Calu3 (cell line): ENCODE measurements at regions of chr12 and their contacts with region 1.

Region 1: DNA sequence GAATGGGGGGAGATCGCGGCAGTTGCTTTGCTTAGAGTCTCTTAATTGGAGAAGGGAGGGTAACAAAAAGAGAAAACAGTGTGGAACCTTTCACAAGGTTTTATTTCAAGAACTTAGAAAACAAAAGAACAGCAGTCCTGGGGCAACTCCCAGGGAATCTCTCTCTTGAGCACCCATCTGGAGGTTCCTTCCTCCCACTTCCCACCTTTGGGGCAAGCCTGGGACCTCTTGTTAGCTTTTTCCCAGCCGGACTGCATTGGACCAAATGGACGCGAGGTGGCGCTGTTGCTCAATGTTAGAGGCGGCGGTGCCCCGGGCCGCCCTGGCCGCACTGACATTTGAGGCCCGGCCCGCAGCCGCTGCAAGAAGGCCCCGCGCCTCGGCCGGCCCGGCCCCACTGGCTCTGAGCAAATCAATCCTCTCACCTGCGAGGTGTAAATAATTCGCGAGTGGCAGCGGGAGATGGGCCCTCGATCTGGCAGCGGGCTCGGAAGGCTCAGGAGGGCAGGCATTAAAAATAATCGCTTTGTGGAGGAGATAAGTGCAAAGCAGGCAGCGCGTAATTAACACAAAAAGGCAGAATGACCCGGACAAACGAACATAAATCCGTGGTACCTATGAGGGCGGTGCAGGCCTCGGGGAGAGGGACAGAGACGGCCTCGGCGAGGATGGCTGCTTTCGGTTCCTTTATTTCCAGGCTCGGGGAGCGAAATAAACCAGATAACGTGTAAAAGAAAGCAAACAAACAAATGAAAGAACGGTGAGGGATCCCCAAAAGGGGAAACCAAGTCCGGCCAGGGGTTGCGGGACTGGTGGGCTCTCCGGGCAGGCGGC is 2.7 kb upstream of the HOXC8 start:
- DNase-seq: peak; percentile 90
- H3K4me3 Mint-ChIP-seq: peak overlapping the region; percentile 28
- H3K27ac Mint-ChIP-seq: no peak overlapping the region
- H3K4me1 Mint-ChIP-seq: peaks cover 12% of the 10 kb centered on the region
- H3K27me3 Mint-ChIP-seq: peaks cover 100% of the 10 kb centered on the region
- CTCF ChIP-seq: peak; percentile 95

Region 2: DNA sequence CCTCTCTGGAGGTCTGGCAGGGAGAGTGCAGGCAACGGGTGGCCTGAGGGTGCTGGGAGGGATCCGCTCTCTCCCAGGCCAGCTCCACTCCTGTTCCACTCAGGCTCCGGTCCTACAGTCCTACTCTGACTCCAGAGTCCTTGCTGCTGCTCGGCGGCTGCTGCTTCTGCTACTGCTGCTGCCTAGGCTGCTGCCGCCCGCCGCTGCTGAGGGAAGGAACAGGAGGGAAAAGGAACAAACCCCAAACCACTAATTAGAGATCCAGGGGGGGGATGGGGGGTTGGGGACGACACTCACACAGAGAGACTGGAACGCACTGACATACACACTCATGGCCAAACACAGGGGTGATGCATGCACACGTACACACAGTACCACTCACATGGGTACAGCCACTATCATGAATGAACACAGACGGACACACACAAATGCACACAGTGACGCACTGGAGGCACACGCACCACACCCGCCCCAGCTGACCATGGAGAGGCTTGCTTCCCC is 669.8 kb before region 1 on chr12 and contains the start of gene SP7:
- CTCF ChIA-PET with region 1: no interaction called
- intact Hi-C with region 1: no loop called
- DNase-seq: no peak
- H3K4me3 Mint-ChIP-seq: no peak within 1 kb of the TSS
- H3K27ac Mint-ChIP-seq: no peak within 1 kb of the TSS
- H3K4me1 Mint-ChIP-seq: no peaks in the 10 kb centered on the region
- H3K27me3 Mint-ChIP-seq: peaks cover 94% of the 10 kb centered on the region
- CTCF ChIP-seq: no peak
- total RNA-seq, gene SP7: not detected in 2 replicates

Region 3: DNA sequence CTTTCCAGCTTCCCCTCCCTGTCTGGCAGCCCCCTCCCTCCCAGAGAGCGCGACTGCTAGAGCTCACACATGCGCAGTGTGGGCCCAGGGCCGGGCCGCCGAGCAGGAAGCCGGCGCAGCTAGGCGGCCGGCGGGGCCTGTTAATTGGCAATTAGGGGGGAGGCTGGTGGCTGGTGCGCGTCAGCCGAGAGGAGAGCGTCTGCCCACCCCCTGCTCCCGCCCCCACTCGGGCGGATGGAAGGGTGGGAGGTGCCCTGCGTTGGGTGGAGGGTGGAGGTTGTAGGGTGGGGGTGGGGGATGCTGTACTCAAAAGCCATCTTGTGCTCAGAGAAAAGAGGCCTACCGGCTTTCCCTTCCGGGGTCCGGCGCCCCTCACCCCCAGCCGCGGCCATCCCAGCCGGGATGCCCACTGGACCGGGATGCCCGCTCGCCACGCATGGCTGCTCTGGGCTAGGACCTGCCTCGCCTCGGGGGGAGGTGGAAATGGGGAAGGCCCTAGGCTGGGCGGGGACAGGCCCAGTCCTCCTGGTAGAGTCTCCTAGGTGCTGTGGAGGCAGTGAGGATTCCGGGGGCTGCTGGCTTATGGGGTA is 11.9 kb after region 1 on chr12:
- CTCF ChIA-PET with region 1: interaction called, 18 read pairs
- intact Hi-C with region 1: no loop called
- DNase-seq: peak; percentile 81
- H3K4me3 Mint-ChIP-seq: peak overlapping the region; percentile 77
- H3K27ac Mint-ChIP-seq: no peak overlapping the region
- H3K4me1 Mint-ChIP-seq: no peaks in the 10 kb centered on the region
- H3K27me3 Mint-ChIP-seq: peaks cover 80% of the 10 kb centered on the region
- CTCF ChIP-seq: no peak

Region 4: GRCh38 chr12:54191550-54192022 is 185.5 kb after region 1 on chr12:
- CTCF ChIA-PET with region 1: interaction called, 24 read pairs
- intact Hi-C with region 1: no loop called
- DNase-seq: peak; percentile 85
- H3K4me3 Mint-ChIP-seq: no peak overlapping the region
- H3K27ac Mint-ChIP-seq: no peak overlapping the region
- H3K4me1 Mint-ChIP-seq: peaks cover 24% of the 10 kb centered on the region
- H3K27me3 Mint-ChIP-seq: peaks cover 66% of the 10 kb centered on the region
- CTCF ChIP-seq: peak; percentile 76

Region 5: DNA sequence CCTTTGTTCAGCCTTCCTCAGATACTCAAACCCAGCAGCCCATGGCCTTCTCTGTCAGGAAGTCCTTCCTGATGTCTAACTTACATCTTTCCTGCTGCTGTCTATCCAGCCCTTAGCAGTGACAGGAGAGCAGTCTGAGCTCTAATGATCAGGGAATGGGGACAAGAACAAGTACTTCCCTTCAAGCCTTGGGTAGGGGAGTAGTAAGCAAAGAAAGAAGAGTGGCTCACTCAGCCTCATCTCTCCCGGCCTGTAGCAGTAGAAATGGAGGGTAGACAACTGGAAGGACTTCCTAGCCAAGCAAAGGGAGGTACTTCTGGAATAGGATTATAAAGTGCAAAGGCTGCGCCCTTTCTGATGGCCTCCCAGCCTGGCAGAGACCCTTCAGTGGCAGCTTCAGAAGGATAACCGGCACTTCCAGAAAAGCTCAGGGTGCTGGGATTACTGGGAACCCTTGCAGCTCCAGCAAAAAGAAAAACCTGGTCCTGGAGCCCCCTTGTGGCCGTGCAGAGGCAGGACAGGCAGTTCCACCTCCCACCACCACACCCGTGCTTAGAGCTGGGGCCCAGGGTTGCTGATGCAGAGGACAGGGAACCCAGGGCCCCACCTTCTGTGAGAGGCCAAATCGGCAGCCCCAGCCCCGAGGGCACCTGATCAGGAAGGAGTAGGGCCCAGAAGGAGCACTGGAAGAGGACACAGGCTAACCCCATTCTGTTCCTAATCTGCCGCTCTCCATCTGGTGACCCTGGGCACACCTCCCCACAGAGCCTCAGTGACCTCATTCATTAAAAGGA is 195.1 kb after region 1 on chr12:
- CTCF ChIA-PET with region 1: interaction called, 45 read pairs
- intact Hi-C with region 1: loop called (anchors 2 kb)
- DNase-seq: peak; percentile 88
- H3K4me3 Mint-ChIP-seq: no peak overlapping the region
- H3K27ac Mint-ChIP-seq: no peak overlapping the region
- H3K4me1 Mint-ChIP-seq: no peaks in the 10 kb centered on the region
- H3K27me3 Mint-ChIP-seq: peaks cover 82% of the 10 kb centered on the region
- CTCF ChIP-seq: peak; percentile 98

Region 6: DNA sequence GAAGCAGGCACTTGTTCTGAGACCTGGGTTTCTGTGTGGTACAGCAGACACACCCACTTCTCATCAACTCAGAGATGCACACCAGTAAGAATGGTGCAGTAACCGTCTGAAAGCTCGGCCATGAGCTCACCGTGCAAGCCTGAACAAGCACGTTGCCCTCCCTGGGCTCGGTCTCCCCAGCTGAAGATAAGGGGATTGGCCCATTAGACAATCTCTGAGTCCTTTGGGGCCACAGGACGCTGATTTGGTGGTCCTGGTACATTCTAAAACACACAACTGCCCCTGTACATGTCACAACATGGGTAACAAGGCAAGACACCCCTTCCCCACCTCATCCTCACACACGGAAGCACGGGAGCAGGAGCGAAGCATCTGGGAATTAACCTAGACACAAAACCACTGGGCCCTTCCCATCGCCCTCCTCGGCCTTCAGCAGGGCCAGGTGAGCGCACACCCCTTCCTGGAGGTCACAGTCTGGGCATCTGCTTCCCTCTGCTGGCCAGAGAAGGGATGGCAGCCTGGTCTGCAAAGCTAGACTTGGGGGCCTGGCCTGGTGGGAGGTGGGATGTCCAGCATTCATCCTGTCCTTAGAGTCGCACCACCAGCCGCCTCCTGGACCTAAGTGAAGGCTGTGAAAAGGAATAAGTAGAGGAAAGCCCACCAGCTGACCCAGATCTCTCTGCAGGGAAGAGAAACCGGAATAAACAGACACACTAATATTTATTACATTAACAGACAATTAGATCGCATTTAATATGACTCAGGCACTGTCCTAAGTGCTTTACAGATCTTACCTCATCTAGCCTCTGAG is 201.6 kb after region 1 on chr12:
- CTCF ChIA-PET with region 1: interaction called, 45 read pairs
- intact Hi-C with region 1: loop called (anchors 1 kb)
- DNase-seq: peak; percentile 92
- H3K4me3 Mint-ChIP-seq: no peak overlapping the region
- H3K27ac Mint-ChIP-seq: no peak overlapping the region
- H3K4me1 Mint-ChIP-seq: no peaks in the 10 kb centered on the region
- H3K27me3 Mint-ChIP-seq: peaks cover 86% of the 10 kb centered on the region
- CTCF ChIP-seq: peak; percentile 92

Region 7: GRCh38 chr12:54579696-54580333 is 573.7 kb after region 1 on chr12:
- CTCF ChIA-PET with region 1: no interaction called
- intact Hi-C with region 1: no loop called
- DNase-seq: peak; percentile 92
- H3K4me3 Mint-ChIP-seq: no peak overlapping the region
- H3K27ac Mint-ChIP-seq: no peak overlapping the region
- H3K4me1 Mint-ChIP-seq: no peaks in the 10 kb centered on the region
- H3K27me3 Mint-ChIP-seq: peaks cover 100% of the 10 kb centered on the region
- CTCF ChIP-seq: peak; percentile 99